ENCODE measurements at regions of chr2 and their contacts with region 1.

Region 1: GRCh38 chr2:37877457-37878315 is 47.4 kb upstream of the RMDN2 start:
- H3K4me3 ChIP-seq: no peak overlapping the region
- H3K27ac ChIP-seq: no peak overlapping the region
- H3K4me1 ChIP-seq: no peaks in the 10 kb centered on the region
- CTCF ChIP-seq: peak; percentile 49

Region 2: DNA sequence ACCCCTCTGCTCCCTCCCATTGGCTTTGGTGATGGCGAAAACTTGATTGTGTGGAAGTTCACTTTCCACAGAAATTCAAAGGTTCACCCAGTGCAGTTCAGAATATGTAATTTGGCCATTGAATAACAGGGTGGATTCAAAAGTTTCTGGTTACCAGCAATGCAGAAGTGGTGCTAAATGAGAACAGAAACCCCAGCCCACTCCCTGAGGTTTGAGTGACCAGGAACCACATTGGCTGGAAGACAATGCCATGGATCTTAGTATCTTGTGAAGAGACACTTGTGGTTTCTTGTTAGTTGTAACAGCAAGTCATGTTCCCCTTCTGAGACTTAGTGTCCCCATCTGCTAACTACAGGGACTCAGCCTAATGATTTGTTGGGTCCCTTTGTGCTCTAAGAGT is 483.4 kb before region 1 on chr2:
- CTCF ChIA-PET with region 1: interaction called, 209 read pairs
- POLR2A ChIA-PET with region 1: no interaction called
- H3K4me3 ChIP-seq: no peak overlapping the region
- H3K27ac ChIP-seq: no peak overlapping the region
- H3K4me1 ChIP-seq: 0 out of 2 replicates have a peak, but pooled peaks cover 7% of the 10 kb centered on the region
- CTCF ChIP-seq: no peak

Region 3: DNA sequence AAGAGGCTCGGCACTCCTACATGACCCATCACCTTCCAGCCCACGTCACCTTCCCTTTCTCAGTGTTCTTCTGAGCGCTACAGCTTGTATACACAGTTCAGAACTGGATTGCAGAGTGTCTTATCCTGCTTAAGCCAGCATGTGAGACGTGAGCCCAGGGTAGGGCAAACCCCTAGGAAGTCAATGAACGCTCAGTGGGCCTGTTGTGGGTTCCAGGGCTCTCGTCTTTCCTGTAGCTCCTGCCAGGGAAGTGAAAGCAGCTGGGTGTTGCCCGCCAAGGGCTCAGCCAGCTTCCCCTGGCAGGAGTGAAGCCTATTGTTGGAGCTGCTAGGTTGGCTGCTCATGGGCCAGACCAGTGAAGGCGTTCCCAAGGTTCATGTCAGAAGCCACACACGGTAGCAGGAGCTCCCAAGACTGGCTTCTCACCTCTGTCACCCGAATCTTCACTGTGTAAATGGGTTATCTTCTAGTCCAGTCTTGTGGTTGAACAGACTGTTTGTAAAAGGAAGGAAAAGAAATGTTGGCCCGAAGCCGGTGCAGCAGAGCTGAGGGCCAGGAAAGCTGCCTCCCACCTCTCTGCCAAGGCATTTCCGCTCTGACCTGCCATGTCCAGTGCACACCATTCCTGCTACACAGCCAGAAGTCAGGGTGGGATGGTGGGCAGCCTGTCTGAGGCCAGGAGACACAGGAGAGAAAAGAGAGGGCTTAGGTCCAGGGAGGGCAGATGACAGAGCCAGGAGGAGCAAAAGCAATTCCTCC is 22.2 kb before region 1 on chr2:
- CTCF ChIA-PET with region 1: interaction called, 15 read pairs
- POLR2A ChIA-PET with region 1: interaction called, 3 read pairs
- H3K4me3 ChIP-seq: no peak overlapping the region
- H3K27ac ChIP-seq: no peak overlapping the region
- H3K4me1 ChIP-seq: peaks cover 4% of the 10 kb centered on the region; the same call in 1 of the 2 replicates
- CTCF ChIP-seq: no peak

Region 4: GRCh38 chr2:37865640-37866039 is 12.0 kb before region 1 on chr2:
- CTCF ChIA-PET with region 1: interaction called, 20 read pairs
- POLR2A ChIA-PET with region 1: interaction called, 3 read pairs
- H3K4me3 ChIP-seq: no peak overlapping the region
- H3K27ac ChIP-seq: no peak overlapping the region
- H3K4me1 ChIP-seq: no peaks in the 10 kb centered on the region
- CTCF ChIP-seq: no peak

Region 5: GRCh38 chr2:37890893-37891495 is 13.3 kb after region 1 on chr2:
- CTCF ChIA-PET with region 1: interaction called, 30 read pairs
- POLR2A ChIA-PET with region 1: no interaction called
- H3K4me3 ChIP-seq: no peak overlapping the region
- H3K27ac ChIP-seq: no peak overlapping the region
- H3K4me1 ChIP-seq: no peaks in the 10 kb centered on the region
- CTCF ChIP-seq: peak; percentile 15; the same call in 1 of the 2 replicates

Region 6: DNA sequence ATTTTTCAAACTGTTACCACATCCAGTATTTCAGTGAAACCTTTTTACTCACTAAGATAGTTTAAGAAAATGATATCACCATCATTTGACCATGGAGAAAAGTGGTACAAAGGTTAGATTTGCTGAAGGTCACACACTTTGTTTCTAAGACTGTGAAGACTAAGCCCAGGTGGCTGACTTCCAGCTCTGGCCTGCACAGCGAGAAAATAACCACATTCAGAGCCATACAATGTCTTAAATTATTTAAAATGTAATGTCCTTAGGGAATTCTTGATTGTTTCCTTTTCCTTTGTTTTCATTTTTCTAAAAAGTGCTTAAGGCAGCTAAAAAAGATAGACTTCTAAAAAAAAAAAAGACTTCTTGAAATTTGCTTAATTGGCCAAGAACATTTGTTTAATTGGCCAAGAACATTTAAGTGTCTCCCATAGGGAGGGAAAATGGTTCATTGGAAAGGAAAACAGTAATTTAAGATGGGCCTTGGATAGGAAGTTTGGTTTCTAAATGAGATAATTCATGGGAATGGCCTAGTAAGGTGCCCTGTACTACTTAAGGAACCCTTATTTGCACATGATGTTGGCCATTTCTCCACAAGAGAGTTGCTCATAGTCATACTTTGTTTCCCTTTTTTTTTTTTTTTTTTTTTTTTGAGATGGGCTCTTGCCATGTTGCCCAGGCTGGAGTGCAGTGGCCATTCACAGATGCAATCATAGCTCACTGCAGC is 153.1 kb after region 1 on chr2:
- CTCF ChIA-PET with region 1: no interaction called
- POLR2A ChIA-PET with region 1: no interaction called
- H3K4me3 ChIP-seq: no peak overlapping the region
- H3K27ac ChIP-seq: no peak overlapping the region
- H3K4me1 ChIP-seq: no peaks in the 10 kb centered on the region
- CTCF ChIP-seq: no peak